Activated CD4-positive, alpha-beta T cell treated with anti-CD3 and anti-CD28 coated beads for 36 hours (primary cell): ENCODE measurements at regions of chr9 and their contacts with region 1.

Region 1: DNA sequence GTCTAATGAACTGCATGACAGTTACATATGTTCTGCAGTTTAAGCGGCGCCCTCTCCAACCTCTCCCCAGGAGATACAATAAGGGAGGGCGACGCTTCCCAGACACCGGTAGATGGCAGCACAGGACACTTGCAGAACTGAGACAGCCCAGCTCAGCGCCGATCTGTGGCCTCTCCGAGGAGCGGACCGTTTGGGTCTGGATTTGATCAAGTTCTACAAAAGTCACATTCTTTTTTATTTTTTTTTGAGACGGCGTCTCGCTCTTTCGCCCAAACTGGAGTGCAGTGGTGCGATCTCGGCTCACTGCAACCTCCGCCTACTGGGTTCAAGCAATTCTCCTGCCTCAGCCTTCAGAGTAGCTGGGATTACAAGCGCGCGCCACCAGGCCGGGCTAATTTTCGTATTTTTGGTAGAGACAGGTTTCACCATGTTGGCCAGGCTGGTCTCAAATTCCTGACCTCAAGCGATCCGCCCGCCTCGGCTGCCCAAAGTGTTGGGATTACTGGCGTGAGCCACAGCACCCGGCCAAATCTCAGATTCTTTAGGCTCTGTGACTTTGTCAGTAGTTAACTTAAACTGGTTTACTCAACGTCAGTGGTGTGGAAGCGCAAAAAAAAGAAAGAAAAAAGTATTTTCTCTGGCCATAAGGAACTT is 1.4 kb upstream of the ATOSB start:
- DNase-seq: peak; percentile 94
- ATAC-seq: peak; percentile 66
- H3K4me3 Mint-ChIP-seq: peak overlapping the region; percentile 77
- H3K27ac Mint-ChIP-seq: peak overlapping the region; percentile 87
- H3K4me1 Mint-ChIP-seq: peaks cover 44% of the 10 kb centered on the region
- H3K27me3 Mint-ChIP-seq: no peaks in the 10 kb centered on the region

Region 2: DNA sequence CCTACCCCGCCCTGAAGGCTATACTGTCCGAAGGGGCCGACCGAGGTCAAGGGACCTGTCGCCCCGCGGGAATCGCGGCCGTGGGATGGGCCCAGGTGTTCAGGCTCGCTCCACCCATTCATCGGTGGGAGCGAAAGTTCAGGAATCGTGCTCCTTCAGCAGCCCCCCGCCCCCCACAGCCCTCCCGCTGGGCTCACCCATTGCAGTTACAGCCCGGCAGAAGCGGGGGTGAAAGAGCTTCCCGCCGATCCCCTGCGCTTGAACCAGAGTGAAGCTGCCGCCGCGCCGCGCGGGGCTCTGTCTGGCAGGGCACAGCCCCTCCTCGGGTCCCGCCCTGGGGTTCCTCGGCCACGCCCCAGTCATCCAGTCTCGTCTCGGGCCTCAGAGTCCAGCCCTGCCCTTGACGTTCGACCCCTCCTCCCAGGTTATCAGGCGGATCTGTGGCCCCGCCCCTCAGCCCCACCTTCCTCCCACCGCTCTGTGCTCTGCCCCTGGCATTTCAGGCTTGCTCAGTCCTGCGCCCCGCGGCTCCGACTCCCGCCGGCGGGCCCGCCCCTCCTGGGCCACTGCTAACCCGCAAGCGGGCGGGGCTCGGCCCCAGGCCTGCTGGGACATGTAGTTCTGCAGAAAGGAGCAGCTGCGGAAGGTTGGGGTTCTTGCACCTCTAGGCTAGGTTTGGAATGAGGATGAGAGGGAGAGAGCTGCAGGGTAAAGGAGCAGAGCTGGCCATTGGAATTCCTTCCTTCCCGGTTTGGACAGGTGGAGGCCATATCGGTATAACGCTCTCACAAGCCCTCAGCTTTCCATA is 740.2 kb before region 1 on chr9 and contains the start of gene MYORG:
- CTCF ChIA-PET with region 1: no interaction called
- POLR2A ChIA-PET with region 1: no interaction called
- intact Hi-C with region 1: loop called in 1 of 2 experiments (anchors 5 kb)
- DNase-seq: peak; percentile 98
- ATAC-seq: peak; percentile 82
- H3K4me3 Mint-ChIP-seq: peak within 1 kb of the TSS; percentile 76
- H3K27ac Mint-ChIP-seq: peak within 1 kb of the TSS; percentile 62
- H3K4me1 Mint-ChIP-seq: peaks cover 36% of the 10 kb centered on the region
- H3K27me3 Mint-ChIP-seq: no peaks in the 10 kb centered on the region
- total RNA-seq, gene MYORG: 2.2 to 2.3 TPM

Region 3: GRCh38 chr9:35071814-35072460 is 45.1 kb before region 1 on chr9:
- CTCF ChIA-PET with region 1: no interaction called
- POLR2A ChIA-PET with region 1: interaction called, 4 read pairs
- intact Hi-C with region 1: loop called in 1 of 2 experiments (anchors 1 kb)
- DNase-seq: peak; percentile 83
- ATAC-seq: peak; percentile 47
- H3K4me3 Mint-ChIP-seq: peak overlapping the region; percentile 91
- H3K27ac Mint-ChIP-seq: peak overlapping the region; percentile 95
- H3K4me1 Mint-ChIP-seq: peaks cover 56% of the 10 kb centered on the region
- H3K27me3 Mint-ChIP-seq: no peaks in the 10 kb centered on the region

Region 4: GRCh38 chr9:35161713-35162604 is 44.9 kb after region 1 on chr9 and contains the start of gene UNC13B:
- CTCF ChIA-PET with region 1: interaction called, 10 read pairs
- POLR2A ChIA-PET with region 1: interaction called, 3 read pairs
- intact Hi-C with region 1: loop called (anchors 1 to 5 kb)
- DNase-seq: peak; percentile 85
- ATAC-seq: peak; percentile 93
- H3K4me3 Mint-ChIP-seq: peak within 1 kb of the TSS; percentile 84
- H3K27ac Mint-ChIP-seq: peak within 1 kb of the TSS; percentile 4
- H3K4me1 Mint-ChIP-seq: peaks cover 22% of the 10 kb centered on the region
- H3K27me3 Mint-ChIP-seq: no peaks in the 10 kb centered on the region
- total RNA-seq, gene UNC13B: 2.7 to 4.0 TPM

Region 5: DNA sequence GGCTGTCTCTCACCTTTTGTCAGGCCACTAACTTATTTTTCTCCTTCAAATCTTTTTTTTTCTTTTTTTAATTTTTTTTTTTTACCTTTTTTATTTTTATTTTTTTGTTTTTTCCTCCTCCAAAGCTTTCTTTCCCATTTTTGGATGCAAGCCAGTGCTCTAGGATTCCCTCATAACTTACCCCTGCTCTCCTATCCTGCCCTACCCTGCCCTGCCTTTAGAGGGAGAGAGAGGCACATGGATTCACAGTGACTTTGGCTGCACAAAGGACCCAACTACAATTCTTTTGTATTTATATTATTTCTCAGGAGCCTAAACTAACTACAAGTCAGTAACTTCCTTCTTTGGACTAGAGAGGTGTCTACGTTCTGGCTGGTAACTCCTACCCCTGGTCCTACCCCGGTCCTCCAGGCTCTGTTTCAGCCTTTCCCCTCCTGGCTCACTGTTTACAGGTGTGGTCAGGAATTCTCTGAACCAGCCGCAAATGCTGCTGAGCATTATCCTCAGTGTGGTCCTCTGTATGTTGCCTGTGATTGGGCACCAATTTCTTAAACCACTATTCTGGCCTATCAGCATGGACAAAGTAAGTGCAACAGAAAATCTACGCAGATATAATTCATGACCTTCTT is 364.4 kb after region 1 on chr9:
- CTCF ChIA-PET with region 1: interaction called, 11 read pairs
- POLR2A ChIA-PET with region 1: no interaction called
- intact Hi-C with region 1: loop called (anchors 1 kb)
- DNase-seq: peak; percentile 46
- ATAC-seq: peak; percentile 78
- H3K4me3 Mint-ChIP-seq: no peak overlapping the region
- H3K27ac Mint-ChIP-seq: no peak overlapping the region
- H3K4me1 Mint-ChIP-seq: no peaks in the 10 kb centered on the region
- H3K27me3 Mint-ChIP-seq: peaks cover 3% of the 10 kb centered on the region

Region 6: DNA sequence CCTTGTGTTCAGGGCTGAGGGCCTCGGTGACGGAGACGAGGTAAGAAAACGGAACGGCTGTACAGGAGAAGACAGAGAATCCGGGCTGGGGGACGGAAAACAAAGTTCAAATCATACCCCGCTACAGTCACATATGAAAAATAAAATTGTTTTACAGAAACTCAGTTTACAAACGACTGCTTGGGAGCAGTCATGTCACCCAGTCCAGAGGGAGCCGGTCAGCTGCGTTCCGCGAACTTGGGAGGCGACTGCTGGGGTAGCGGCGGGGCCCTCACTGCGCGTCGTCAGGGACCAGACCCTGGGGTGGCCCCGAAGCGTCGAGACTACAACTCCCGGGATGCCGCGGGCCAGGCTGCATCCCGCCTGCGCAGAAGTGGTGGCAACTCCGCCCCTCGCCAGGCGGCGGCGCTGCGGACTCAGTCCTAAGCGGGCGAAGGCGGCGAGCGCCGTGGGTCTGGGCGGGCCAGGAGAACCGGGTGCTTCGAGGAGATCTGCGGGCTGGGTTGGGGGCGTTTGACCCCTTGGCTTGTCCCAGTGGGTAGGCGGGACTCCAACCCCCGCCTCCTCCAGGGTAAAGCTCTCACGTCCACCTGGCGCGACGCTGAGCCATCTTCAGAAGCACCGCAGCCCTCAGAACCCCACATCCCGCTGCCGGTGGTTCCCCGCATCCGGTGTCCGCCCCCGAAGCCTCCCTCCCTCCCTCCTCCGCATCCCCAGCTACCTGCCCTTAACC is 529.7 kb after region 1 on chr9:
- CTCF ChIA-PET with region 1: interaction called, 5 read pairs
- POLR2A ChIA-PET with region 1: no interaction called
- intact Hi-C with region 1: loop called (anchors 5 to 10 kb)
- DNase-seq: peak; percentile 96
- ATAC-seq: peak; percentile 84
- H3K4me3 Mint-ChIP-seq: peak overlapping the region; percentile 91
- H3K27ac Mint-ChIP-seq: peak overlapping the region; percentile 97
- H3K4me1 Mint-ChIP-seq: peaks cover 51% of the 10 kb centered on the region
- H3K27me3 Mint-ChIP-seq: no peaks in the 10 kb centered on the region